ENCODE measurements at regions of chr10 and their contacts with region 1.

Region 1: DNA sequence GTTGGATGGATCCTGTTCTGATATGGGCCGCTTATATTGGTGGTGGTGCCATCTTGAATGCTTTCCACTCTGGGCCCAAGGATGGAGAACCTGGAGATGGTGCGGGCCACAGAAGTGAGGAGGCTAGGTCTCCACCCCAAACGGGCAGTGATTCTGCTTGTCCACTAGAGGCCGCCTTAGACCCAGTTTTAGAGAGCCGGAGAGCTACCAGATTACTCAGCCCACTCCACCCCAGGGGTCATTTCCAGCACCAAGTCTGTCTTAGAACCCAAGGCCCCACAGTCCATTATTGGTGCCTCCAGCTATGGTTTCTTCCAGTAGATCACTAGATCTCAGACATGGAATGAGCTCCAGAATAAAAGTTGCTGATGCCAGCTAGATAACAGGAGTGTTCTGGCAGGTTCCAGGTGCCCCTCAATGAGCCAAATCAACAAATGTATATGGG is 11.8 kb upstream of the CAMK2G start:
- DNase-seq: peak; percentile 72
- H3K4me3 ChIP-seq: no peak overlapping the region
- H3K27ac ChIP-seq: peak overlapping the region; percentile 78 to 85 (median 82)
- H3K4me1 ChIP-seq: peaks cover 15 to 31% (median 29%) of the 10 kb centered on the region in 4 donors
- H3K27me3 ChIP-seq: no peaks in the 10 kb centered on the region
- CTCF ChIP-seq: peak; percentile 78 to 92 (median 85)
- EP300 ChIP-seq: no peak
- POLR2A ChIP-seq: no peak

Region 2: GRCh38 chr10:73946253-73947155 is 60.4 kb after region 1 on chr10:
- in situ Hi-C with region 1: loop called in 3 of 4 experiments (anchors 5 to 10 kb)
- intact Hi-C with region 1: loop called (anchors 2 kb)
- DNase-seq: no peak
- H3K4me3 ChIP-seq: no peak overlapping the region
- H3K27ac ChIP-seq: no peak overlapping the region
- H3K4me1 ChIP-seq: no peaks in the 10 kb centered on the region
- H3K27me3 ChIP-seq: no peaks in the 10 kb centered on the region
- CTCF ChIP-seq: no peak
- EP300 ChIP-seq: no peak
- POLR2A ChIP-seq: no peak

Measured in transverse colon (tissue), 4 donors.